ENCODE measurements at regions of chr6 and their contacts with region 1.

Region 1: GRCh38 chr6:130132286-130132701 is 90.5 kb downstream of the SAMD3 start:
- DNase-seq: peak; percentile 69
- H3K4me3 Mint-ChIP-seq: peak overlapping the region; percentile 65
- H3K27ac Mint-ChIP-seq: peak overlapping the region; percentile 85
- H3K4me1 Mint-ChIP-seq: peaks cover 59% of the 10 kb centered on the region
- H3K27me3 Mint-ChIP-seq: no peaks in the 10 kb centered on the region

Region 2: GRCh38 chr6:129844118-129844891 is 288.0 kb before region 1 on chr6:
- CTCF ChIA-PET with region 1: no interaction called
- intact Hi-C with region 1: no loop called
- DNase-seq: no peak
- H3K4me3 Mint-ChIP-seq: no peak overlapping the region
- H3K27ac Mint-ChIP-seq: no peak overlapping the region
- H3K4me1 Mint-ChIP-seq: no peaks in the 10 kb centered on the region
- H3K27me3 Mint-ChIP-seq: peaks cover 2% of the 10 kb centered on the region

Region 3: GRCh38 chr6:130076512-130076911 is 55.8 kb before region 1 on chr6:
- CTCF ChIA-PET with region 1: no interaction called
- intact Hi-C with region 1: loop called (anchors 2 kb)
- DNase-seq: no peak
- H3K4me3 Mint-ChIP-seq: no peak overlapping the region
- H3K27ac Mint-ChIP-seq: no peak overlapping the region
- H3K4me1 Mint-ChIP-seq: peaks cover 14% of the 10 kb centered on the region
- H3K27me3 Mint-ChIP-seq: no peaks in the 10 kb centered on the region

Region 4: DNA sequence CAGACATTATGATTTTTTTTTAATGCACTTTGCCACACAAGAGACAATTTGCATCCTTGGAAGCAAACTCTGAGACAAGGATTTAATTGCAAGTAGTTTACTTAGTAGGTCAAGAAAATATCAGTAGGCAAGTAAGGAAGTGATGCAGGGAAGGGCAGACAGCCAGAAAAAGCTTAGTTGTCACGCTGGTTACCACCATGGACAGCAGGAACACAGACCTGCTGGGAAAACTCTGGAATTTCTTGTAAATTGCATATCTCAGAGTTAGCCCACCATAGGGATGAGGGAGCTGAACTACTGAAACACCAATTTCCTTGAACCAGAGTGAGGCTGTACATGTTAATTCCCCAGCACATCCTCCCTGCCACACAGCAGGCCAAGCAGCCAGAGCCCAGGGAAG is 21.3 kb before region 1 on chr6:
- CTCF ChIA-PET with region 1: no interaction called
- intact Hi-C with region 1: loop called (anchors 2 kb)
- DNase-seq: no peak
- H3K4me3 Mint-ChIP-seq: no peak overlapping the region
- H3K27ac Mint-ChIP-seq: no peak overlapping the region
- H3K4me1 Mint-ChIP-seq: peaks cover 10% of the 10 kb centered on the region
- H3K27me3 Mint-ChIP-seq: no peaks in the 10 kb centered on the region

Region 5: DNA sequence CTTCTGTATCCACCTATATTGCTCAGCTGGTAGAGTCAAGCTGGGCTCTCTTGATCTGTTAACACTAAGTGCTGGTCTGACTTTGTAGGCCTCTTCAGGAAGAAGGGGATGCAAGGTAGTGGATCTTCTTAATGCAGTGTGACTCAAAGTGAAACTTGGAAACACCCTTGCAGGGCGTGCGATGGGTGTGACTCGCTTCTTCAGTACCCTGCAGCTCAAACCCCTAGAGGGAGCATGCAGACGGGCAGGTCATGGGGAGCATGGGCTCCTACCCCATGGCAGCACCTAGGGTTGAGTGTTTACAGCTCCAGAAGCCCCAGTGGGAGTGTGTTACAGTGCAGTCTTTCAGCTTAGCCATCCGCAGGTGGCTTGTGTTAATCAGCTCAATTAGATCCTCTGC is 91.2 kb after region 1 on chr6:
- CTCF ChIA-PET with region 1: no interaction called
- intact Hi-C with region 1: loop called (anchors 1 kb)
- DNase-seq: peak; percentile 82
- H3K4me3 Mint-ChIP-seq: no peak overlapping the region
- H3K27ac Mint-ChIP-seq: no peak overlapping the region
- H3K4me1 Mint-ChIP-seq: peaks cover 22% of the 10 kb centered on the region
- H3K27me3 Mint-ChIP-seq: no peaks in the 10 kb centered on the region

Measured in activated naive CD4-positive, alpha-beta T cell treated with anti-CD3 and anti-CD28 coated beads for 36 hours (primary cell).